H1 (cell line): ENCODE measurements at regions of chr19 and their contacts with region 1.

Region 1: DNA sequence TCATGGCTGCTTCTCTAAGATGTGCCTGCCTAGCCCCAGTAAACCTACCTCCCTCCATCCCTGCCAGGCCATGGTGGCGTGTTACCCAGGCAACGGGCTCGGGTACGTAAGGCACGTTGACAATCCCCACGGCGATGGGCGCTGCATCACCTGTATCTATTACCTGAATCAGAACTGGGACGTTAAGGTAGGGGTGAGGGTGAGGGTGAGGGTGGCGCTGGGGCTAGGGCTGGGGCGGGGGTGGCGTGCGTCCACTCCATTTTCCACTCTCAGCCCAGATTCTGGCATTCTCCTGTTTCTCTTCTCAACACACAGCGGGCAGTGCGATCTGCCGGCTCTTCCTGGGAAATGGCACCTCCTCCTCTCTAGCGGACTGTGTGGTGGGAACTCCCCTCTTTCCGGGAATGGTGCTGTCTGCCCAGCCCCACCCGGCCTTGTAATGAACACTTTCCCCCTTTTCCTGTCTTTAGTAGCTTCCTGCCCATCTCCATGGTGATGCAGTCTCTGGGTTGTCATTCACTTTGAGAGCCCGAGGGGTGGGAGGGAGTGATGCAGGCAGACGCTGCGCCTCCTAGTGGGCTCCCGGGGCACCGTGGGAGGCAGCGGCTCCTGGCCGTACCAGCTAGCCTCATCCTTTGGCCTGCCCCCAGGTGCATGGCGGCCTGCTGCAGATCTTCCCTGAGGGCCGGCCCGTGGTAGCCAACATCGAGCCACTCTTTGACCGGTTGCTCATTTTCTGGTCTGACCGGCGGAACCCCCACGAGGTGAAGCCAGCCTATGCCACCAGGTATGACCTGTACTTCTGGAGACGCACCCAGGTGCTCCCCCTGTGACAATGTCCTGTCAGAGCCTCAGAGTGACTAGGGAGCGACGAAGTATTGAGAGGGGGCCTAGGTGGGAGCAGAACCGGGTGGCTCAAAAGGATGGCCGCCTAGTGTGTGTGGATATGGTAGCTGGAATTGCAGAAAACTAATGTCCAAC is 7.8 kb downstream of the EGLN2 start:
- DNase-seq: peak; percentile 90 to 95
- H3K4me3 ChIP-seq: peak overlapping the region in 3 of 4 experiments; percentile 22 to 35 (median 23); a peak in 3 of 8 replicates
- H3K27ac ChIP-seq: no peak overlapping the region; the same call in 1 of the 2 replicates
- H3K4me1 ChIP-seq: peaks cover 3 to 55% (median 27%) of the 10 kb centered on the region in 4 experiments
- H3K27me3 ChIP-seq: no peaks in the 10 kb centered on the region; a peak in 1 of 7 replicates
- CTCF ChIP-seq: peak; percentile 84 to 98 (median 98)
- EP300 ChIP-seq: peak; percentile 63 to 98
- POLR2A ChIP-seq: no peak; a peak in 1 of 3 replicates
- RAD21 ChIP-seq: peak; percentile 52 to 61

Region 2: DNA sequence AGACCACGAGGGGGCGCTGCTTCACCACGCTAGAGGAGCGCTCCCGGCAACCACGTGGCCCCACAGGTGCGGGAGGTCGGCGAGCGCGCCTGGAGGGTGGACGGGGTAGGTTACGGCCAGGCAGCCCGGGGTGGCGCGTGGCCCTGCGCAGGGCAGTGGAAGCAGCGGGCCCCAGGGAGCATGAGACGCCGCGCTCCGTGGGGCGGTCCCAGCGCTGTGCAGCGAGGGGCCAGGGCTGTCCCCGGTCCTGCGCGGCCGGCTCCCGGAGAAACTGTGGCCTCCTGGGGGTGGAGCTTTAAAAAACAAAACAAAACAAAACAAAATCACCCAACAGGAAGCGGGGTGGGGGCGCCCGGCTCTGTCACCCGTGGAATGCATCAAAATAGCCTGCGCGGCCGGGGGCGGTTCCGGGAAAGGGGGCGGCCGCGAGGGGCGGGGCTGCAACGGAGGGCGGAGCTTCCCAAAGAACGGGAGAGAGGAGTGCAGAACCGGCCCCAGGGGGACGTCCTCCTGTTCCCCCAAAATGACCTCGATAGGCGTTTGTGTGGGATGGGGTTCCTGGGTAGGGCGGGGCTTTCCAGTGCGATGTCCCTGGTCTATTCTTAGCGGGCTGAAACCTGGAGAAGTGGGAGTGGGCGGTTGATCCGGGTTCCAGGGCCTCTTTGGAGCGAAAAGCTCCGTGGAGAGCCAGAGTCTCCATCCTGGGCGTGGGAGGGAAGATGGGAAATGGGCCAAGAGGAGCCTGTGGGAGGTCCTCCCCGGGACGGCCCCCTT is 143.7 kb before region 1 on chr19:
- CTCF ChIA-PET with region 1: interaction called, 18 read pairs
- POLR2A ChIA-PET with region 1: interaction called, 9 read pairs
- DNase-seq: peak; percentile 70 to 98
- H3K4me3 ChIP-seq: peak overlapping the region; percentile 35 to 74 (median 60)
- H3K27ac ChIP-seq: no peak overlapping the region; the same call in 1 of the 2 replicates
- H3K4me1 ChIP-seq: peaks cover 0 to 4% (median 3%) of the 10 kb centered on the region in 4 experiments; a peak in 5 of 7 replicates
- H3K27me3 ChIP-seq: no peaks in the 10 kb centered on the region
- CTCF ChIP-seq: peak; percentile 82 to 95 (median 93)
- EP300 ChIP-seq: no peak
- POLR2A ChIP-seq: no peak; a peak in 1 of 3 replicates
- RAD21 ChIP-seq: peak; percentile 92 to 97

Region 3: DNA sequence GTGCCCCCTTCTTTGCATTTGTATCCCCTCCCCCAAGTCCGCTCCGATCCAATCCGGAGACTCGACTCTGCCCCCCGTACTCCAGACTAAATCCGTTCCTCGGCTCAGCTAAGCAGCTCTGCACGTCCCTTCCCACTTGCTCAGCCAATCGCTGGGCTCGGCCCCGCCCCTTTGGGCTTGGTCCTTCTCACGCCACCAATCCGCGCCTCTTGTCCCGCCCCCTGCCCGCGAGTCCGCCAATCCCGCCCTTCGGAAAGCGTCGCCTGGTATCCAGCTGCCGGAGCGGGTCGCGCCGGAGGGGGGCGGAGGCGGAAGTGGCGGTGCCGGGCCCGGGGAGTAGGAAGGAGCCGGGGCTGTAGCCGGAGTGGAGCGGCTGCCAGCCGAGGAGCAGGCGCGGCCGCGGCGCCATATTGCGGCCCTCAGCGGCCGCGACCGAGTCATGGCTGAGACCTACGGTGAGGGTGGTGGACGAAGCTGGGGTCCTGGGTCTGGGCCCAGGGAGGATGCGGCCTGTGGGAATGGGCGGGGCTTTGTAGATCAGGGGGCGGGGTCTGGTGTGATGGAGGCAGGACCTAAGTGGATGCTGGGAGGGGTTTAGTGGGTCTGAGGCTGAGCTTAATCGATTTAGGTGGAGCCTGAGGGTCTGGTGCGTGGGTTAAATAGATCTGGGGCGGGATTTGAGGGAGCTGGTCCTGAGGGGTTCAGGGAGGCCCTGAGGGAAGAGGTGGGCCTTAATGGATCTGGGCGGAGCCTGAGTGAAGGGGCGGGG is 28.7 kb before region 1 on chr19 and contains the start of gene RAB4B:
- CTCF ChIA-PET with region 1: interaction called, 19 read pairs
- POLR2A ChIA-PET with region 1: interaction called, 218 read pairs
- DNase-seq: peak; percentile 100
- H3K4me3 ChIP-seq: peak within 1 kb of the TSS; percentile 79 to 90 (median 86)
- H3K27ac ChIP-seq: peak within 1 kb of the TSS; percentile 99
- H3K4me1 ChIP-seq: peaks cover 0 to 14% (median 6%) of the 10 kb centered on the region in 4 experiments; a peak in 6 of 7 replicates
- H3K27me3 ChIP-seq: no peaks in the 10 kb centered on the region
- CTCF ChIP-seq: no peak
- EP300 ChIP-seq: no peak
- POLR2A ChIP-seq: no peak
- RAD21 ChIP-seq: no peak
- total RNA-seq, gene RAB4B: 15.8 and 15.9 TPM in 2 replicates

Region 4: GRCh38 chr19:40858109-40858508 is 51.3 kb after region 1 on chr19:
- CTCF ChIA-PET with region 1: no interaction called
- POLR2A ChIA-PET with region 1: no interaction called
- DNase-seq: no peak
- H3K4me3 ChIP-seq: no peak overlapping the region
- H3K27ac ChIP-seq: no peak overlapping the region
- H3K4me1 ChIP-seq: no peaks in the 10 kb centered on the region
- H3K27me3 ChIP-seq: no peaks in the 10 kb centered on the region
- CTCF ChIP-seq: no peak
- EP300 ChIP-seq: no peak
- POLR2A ChIP-seq: no peak
- RAD21 ChIP-seq: peak; percentile 29 to 45